ENCODE measurements at regions of chr19 and their contacts with region 1.

Region 1: DNA sequence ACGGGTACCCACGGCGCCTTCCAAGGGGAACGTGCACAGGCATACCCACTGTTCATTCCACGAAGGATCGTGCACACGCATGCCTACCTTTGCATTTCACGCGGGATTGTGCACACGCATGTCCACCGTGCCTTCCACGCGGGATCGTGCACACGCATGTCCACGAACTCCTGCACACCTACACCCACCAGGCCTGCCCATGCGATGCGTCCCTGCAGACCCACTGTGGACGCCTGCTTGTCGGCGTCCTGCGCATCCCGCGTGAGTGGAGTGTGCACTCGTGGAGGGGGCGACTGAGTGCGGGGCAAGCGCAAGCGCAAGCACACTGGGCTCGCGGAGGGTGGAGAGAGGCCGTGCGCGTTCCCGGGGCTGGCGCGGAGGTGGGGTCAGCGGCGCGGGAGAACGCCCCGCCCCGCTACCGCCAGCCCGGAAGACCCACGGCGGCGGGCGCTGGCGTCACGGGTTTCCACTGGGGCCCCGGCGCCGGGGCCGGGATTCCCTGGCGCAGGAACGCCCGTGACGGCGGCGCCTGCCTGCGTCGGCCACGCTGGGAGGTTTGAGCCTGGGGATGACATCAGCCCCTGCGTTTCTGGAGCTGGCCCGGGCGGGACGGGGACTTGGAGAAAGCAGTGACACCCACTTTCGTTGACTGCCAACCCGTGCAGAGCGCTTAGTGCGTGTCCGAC is 18.7 kb downstream of the GADD45B start:
- DNase-seq: no peak
- H3K4me3 ChIP-seq: peak overlapping the region; percentile 56 to 65 (median 60)
- H3K27ac ChIP-seq: peak overlapping the region; percentile 87 to 89 (median 88)
- H3K4me1 ChIP-seq: peaks cover 40 to 56% (median 52%) of the 10 kb centered on the region in 4 donors
- H3K27me3 ChIP-seq: no peaks in the 10 kb centered on the region
- CTCF ChIP-seq: no peak
- EP300 ChIP-seq: peak; percentile 34
- POLR2A ChIP-seq: no peak

Region 2: GRCh38 chr19:1947329-1948209 is 547.0 kb before region 1 on chr19:
- intact Hi-C with region 1: no loop called
- DNase-seq: no peak
- H3K4me3 ChIP-seq: no peak overlapping the region
- H3K27ac ChIP-seq: no peak overlapping the region
- H3K4me1 ChIP-seq: peaks cover 20 to 41% (median 36%) of the 10 kb centered on the region in 4 donors
- H3K27me3 ChIP-seq: no peaks in the 10 kb centered on the region
- CTCF ChIP-seq: no peak
- EP300 ChIP-seq: no peak
- POLR2A ChIP-seq: no peak

Region 3: DNA sequence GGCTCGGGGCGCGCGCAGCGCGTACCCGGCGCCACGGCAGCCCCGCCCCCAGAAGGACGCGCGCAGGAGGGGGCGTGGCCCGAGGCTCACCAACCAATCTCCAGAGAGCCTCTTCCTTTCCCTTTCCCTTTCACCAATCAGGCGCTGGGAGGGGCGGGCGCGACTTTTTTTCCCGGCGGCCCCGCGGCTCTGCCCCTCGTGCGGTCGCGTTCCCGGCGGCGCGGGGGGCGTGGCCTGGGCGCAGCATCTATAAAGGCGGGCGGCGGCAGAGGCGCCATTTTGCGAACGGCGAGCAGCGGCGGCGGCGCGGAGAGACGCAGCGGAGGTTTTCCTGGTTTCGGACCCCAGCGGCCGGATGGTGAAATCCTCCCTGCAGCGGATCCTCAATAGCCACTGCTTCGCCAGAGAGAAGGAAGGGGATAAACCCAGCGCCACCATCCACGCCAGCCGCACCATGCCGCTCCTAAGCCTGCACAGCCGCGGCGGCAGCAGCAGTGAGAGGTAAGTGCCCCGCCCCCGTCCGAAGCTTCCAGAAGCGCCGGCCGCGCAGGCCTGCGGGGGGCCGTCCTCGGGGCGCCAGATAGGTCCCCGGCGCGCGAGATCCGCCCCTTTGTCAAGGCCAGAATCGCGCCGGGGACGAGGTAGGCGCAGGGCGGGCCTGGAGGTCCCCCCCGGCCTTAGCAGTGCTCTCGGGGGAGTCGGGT is 225.2 kb before region 1 on chr19:
- intact Hi-C with region 1: no loop called
- DNase-seq: peak; percentile 100
- H3K4me3 ChIP-seq: peak overlapping the region; percentile 82 to 100 (median 98)
- H3K27ac ChIP-seq: peak overlapping the region; percentile 99 to 100 (median 100)
- H3K4me1 ChIP-seq: peaks cover 41 to 61% (median 54%) of the 10 kb centered on the region in 4 donors
- H3K27me3 ChIP-seq: no peaks in the 10 kb centered on the region
- CTCF ChIP-seq: peak; percentile 8 to 35 (median 18)
- EP300 ChIP-seq: no peak
- POLR2A ChIP-seq: peak; percentile 99

Region 4: GRCh38 chr19:2537584-2538433 is 43.2 kb after region 1 on chr19:
- intact Hi-C with region 1: loop called (anchors 5 kb)
- DNase-seq: no peak
- H3K4me3 ChIP-seq: no peak overlapping the region
- H3K27ac ChIP-seq: no peak overlapping the region
- H3K4me1 ChIP-seq: peaks cover 26 to 38% (median 34%) of the 10 kb centered on the region in 4 donors
- H3K27me3 ChIP-seq: no peaks in the 10 kb centered on the region
- CTCF ChIP-seq: no peak
- EP300 ChIP-seq: no peak
- POLR2A ChIP-seq: no peak

Measured in esophagus muscularis mucosa (tissue), 4 donors.